ENCODE measurements at regions of chr1 and their contacts with region 1.

Region 1: GRCh38 chr1:59296358-59297256 is at the start of gene FGGY:
- DNase-seq: peak; percentile 90 to 97 (median 94)

Region 2: DNA sequence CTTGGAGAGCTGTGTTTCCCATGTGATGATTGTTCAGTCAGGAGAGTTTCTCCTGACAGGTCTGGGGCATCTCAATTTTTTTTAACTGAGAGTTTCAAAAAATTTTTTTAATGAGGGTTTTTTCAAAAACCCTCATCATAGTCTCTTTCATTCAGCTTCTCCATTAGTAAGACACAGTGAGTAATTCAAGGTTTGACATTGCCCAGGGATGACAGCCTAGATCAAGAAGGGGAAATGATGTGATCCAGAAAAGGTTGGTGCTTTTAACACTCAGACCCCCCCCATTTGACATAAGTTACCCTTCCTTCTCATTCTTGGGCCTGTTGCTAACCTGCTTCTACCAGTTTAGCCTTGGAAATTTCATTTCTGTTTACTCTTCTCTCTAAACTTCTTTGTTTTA is 328.8 kb after region 1 on chr1:
- intact Hi-C with region 1: no loop called
- DNase-seq: no peak

Region 3: GRCh38 chr1:59699227-59699847 is 402.7 kb after region 1 on chr1:
- intact Hi-C with region 1: loop called (anchors 10 kb)
- DNase-seq: peak in 24 of 42 donors; percentile 5 to 72 (median 33)